CD8-positive, alpha-beta T cell (primary cell): ENCODE measurements at regions of chr21 and their contacts with region 1.

Region 1: GRCh38 chr21:20486303-20486702 is 511.9 kb upstream of the NCAM2 start:
- DNase-seq: no peak
- ATAC-seq: no peak
- H3K4me3 ChIP-seq: no peak overlapping the region
- H3K4me3 Mint-ChIP-seq: no peak overlapping the region
- H3K27ac ChIP-seq: no peak overlapping the region
- H3K27ac Mint-ChIP-seq: no peak overlapping the region
- H3K4me1 ChIP-seq: no peaks in the 10 kb centered on the region
- H3K4me1 Mint-ChIP-seq: no peaks in the 10 kb centered on the region
- H3K27me3 ChIP-seq: no peaks in the 10 kb centered on the region
- H3K27me3 Mint-ChIP-seq: no peaks in the 10 kb centered on the region
- CTCF ChIP-seq: no peak

Region 2: GRCh38 chr21:20445971-20446370 is 40.3 kb before region 1 on chr21:
- CTCF ChIA-PET with region 1: no interaction called
- POLR2A ChIA-PET with region 1: no interaction called
- intact Hi-C with region 1: loop called in 1 of 2 experiments (anchors 1 kb)
- DNase-seq: no peak
- ATAC-seq: no peak
- H3K4me3 ChIP-seq: no peak overlapping the region
- H3K4me3 Mint-ChIP-seq: no peak overlapping the region
- H3K27ac ChIP-seq: no peak overlapping the region
- H3K27ac Mint-ChIP-seq: no peak overlapping the region
- H3K4me1 ChIP-seq: no peaks in the 10 kb centered on the region
- H3K4me1 Mint-ChIP-seq: no peaks in the 10 kb centered on the region
- H3K27me3 ChIP-seq: no peaks in the 10 kb centered on the region
- H3K27me3 Mint-ChIP-seq: no peaks in the 10 kb centered on the region
- CTCF ChIP-seq: no peak